Activated CD8-positive, alpha-beta T cell treated with anti-CD3 and anti-CD28 coated beads for 36 hours (primary cell): ENCODE measurements at regions of chr4 and their contacts with region 1.

Region 1: GRCh38 chr4:114263233-114263632 is 283.8 kb upstream of the ARSJ start:
- DNase-seq: no peak
- ATAC-seq: no peak
- H3K4me3 Mint-ChIP-seq: no peak overlapping the region
- H3K27ac Mint-ChIP-seq: no peak overlapping the region
- H3K4me1 Mint-ChIP-seq: no peaks in the 10 kb centered on the region
- H3K27me3 Mint-ChIP-seq: no peaks in the 10 kb centered on the region
- CTCF ChIP-seq: no peak

Region 2: DNA sequence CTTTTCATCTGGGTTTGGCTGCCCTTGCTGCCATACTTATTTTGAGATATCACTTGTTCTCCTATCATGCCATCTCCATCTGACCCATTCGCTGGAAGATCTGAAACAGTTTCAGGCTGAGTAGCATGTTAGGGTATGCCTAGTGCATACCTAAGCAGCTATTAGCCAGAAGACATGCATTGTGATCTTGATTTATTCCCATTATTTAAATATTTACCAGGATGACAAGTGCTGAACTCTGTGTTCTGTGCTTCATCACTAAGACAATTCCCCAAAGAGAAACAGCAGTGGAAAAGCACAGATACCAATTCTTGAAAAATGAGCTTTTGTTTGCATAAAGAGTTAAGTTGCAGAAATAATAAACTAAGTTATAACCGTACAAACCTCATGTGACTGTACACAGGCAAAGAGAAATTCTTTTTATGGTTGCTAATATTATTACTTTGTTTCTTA is 12.8 kb before region 1 on chr4:
- CTCF ChIA-PET with region 1: no interaction called
- POLR2A ChIA-PET with region 1: no interaction called
- intact Hi-C with region 1: loop called (anchors 1 kb)
- DNase-seq: no peak
- ATAC-seq: no peak
- H3K4me3 Mint-ChIP-seq: no peak overlapping the region
- H3K27ac Mint-ChIP-seq: no peak overlapping the region
- H3K4me1 Mint-ChIP-seq: no peaks in the 10 kb centered on the region
- H3K27me3 Mint-ChIP-seq: peaks cover 4% of the 10 kb centered on the region
- CTCF ChIP-seq: no peak